ENCODE measurements at regions of chr3 and their contacts with region 1.

Region 1: GRCh38 chr3:72996473-72997333 is at the start of gene PPP4R2:
- DNase-seq: peak; percentile 83 to 98 (median 90)
- ATAC-seq: peak; percentile 85
- H3K4me3 ChIP-seq: peak within 1 kb of the TSS; percentile 90
- H3K4me3 Mint-ChIP-seq: peak within 1 kb of the TSS; percentile 88
- H3K27ac ChIP-seq: peak within 1 kb of the TSS; percentile 89 to 93
- H3K27ac Mint-ChIP-seq: peak within 1 kb of the TSS; percentile 86
- H3K4me1 ChIP-seq: peaks cover 29% of the 10 kb centered on the region
- H3K4me1 Mint-ChIP-seq: peaks cover 48% of the 10 kb centered on the region
- H3K27me3 ChIP-seq: no peaks in the 10 kb centered on the region
- H3K27me3 Mint-ChIP-seq: no peaks in the 10 kb centered on the region
- CTCF ChIP-seq: no peak
- total RNA-seq, gene PPP4R2: 67.8 to 80.3 TPM

Region 2: DNA sequence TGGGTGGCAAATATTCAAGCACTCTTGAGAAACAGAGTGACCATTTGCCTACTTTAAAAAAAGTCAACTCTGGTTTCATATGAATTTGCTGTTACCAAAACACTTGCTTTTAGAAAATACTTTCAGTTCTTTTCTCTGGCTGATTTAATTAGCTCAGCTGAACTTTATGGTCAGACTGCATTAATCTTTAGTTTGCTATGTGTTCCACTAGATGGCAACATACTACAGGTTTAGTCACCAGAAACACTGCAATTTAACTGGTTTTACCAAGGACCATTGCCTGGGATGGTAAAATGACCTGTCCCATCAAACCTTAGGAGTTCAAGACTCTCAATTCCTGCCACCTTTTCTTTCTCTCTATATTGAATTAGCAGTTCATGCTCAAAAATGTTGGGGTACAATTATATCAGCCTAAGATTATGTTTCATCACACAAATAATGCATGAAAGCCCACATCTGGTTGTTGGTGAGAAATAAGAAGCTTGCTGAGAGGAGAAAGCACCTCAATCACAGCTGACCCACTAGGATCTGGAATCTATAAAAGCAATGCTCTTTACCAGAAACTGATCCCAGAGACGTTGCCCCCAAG is 1285.7 kb before region 1 on chr3:
- CTCF ChIA-PET with region 1: no interaction called
- POLR2A ChIA-PET with region 1: no interaction called
- intact Hi-C with region 1: loop called in 1 of 2 experiments (anchors 10 kb)
- DNase-seq: peak in 3 of 14 experiments; percentile 68 to 72 (median 71)
- ATAC-seq: peak; percentile 58
- H3K4me3 ChIP-seq: no peak overlapping the region
- H3K4me3 Mint-ChIP-seq: peak overlapping the region; percentile 26
- H3K27ac ChIP-seq: no peak overlapping the region
- H3K27ac Mint-ChIP-seq: peak overlapping the region; percentile 80
- H3K4me1 ChIP-seq: peaks cover 50% of the 10 kb centered on the region
- H3K4me1 Mint-ChIP-seq: peaks cover 92% of the 10 kb centered on the region
- H3K27me3 ChIP-seq: no peaks in the 10 kb centered on the region
- H3K27me3 Mint-ChIP-seq: no peaks in the 10 kb centered on the region
- CTCF ChIP-seq: peak; percentile 86

Region 3: GRCh38 chr3:72756900-72757299 is 239.8 kb before region 1 on chr3:
- CTCF ChIA-PET with region 1: no interaction called
- POLR2A ChIA-PET with region 1: no interaction called
- intact Hi-C with region 1: loop called (anchors 5 to 10 kb)
- DNase-seq: peak in 13 of 14 experiments; percentile 12 to 89 (median 35)
- ATAC-seq: peak; percentile 96
- H3K4me3 ChIP-seq: peak overlapping the region; percentile 26
- H3K4me3 Mint-ChIP-seq: peak overlapping the region; percentile 68
- H3K27ac ChIP-seq: peak overlapping the region; percentile 42 to 63
- H3K27ac Mint-ChIP-seq: peak overlapping the region; percentile 85
- H3K4me1 ChIP-seq: peaks cover 22% of the 10 kb centered on the region
- H3K4me1 Mint-ChIP-seq: peaks cover 75% of the 10 kb centered on the region
- H3K27me3 ChIP-seq: no peaks in the 10 kb centered on the region
- H3K27me3 Mint-ChIP-seq: no peaks in the 10 kb centered on the region
- CTCF ChIP-seq: no peak

Region 4: GRCh38 chr3:72847751-72848702 is 148.7 kb before region 1 on chr3 and contains the start of gene SHQ1:
- CTCF ChIA-PET with region 1: interaction called, 3 read pairs
- POLR2A ChIA-PET with region 1: interaction called, 4 read pairs
- intact Hi-C with region 1: loop called (anchors 1 to 2 kb)
- DNase-seq: peak; percentile 86 to 98 (median 92)
- ATAC-seq: peak; percentile 93
- H3K4me3 ChIP-seq: peak within 1 kb of the TSS; percentile 93
- H3K4me3 Mint-ChIP-seq: peak within 1 kb of the TSS; percentile 97
- H3K27ac ChIP-seq: peak within 1 kb of the TSS in 1 of 2 donors; percentile 55
- H3K27ac Mint-ChIP-seq: peak within 1 kb of the TSS; percentile 88
- H3K4me1 ChIP-seq: peaks cover 24% of the 10 kb centered on the region
- H3K4me1 Mint-ChIP-seq: peaks cover 64% of the 10 kb centered on the region
- H3K27me3 ChIP-seq: no peaks in the 10 kb centered on the region
- H3K27me3 Mint-ChIP-seq: no peaks in the 10 kb centered on the region
- CTCF ChIP-seq: no peak
- total RNA-seq, gene SHQ1: 9.4 to 13.1 TPM

Region 5: DNA sequence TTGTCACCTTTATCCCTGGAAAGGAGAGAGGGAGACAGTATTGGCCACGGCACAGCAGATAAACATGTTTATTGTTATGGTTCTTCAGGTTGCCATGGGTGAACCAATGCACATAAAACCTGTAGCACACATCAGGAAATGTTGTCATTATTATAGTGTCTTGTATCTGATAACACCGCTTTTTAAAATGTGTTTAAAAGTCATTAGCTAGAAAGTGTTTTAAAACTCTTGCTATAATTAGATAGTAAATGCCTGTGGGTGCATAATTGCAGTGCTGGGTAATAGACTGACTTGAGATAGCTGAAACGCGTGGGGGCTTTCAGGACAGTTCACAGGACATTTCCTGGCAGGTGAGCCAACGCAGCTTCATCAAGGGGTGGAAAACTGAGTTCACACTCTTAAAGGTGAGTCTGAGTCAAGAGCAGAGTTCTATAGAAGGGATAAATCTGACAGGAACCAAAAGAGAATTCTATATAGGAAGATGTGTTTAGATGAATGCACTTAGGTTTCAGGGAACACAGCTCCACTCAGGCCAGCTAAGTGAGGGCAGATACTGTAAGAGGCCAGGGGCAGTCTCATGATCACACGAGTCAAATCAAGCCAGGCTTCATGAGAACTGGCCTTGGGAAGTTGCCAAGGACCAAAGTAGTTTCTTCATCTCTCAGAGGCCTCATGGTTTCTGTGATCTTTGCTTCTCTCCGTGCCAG is 35.7 kb before region 1 on chr3:
- CTCF ChIA-PET with region 1: interaction called, 3 read pairs
- POLR2A ChIA-PET with region 1: interaction called, 9 read pairs
- intact Hi-C with region 1: loop called in 1 of 2 experiments (anchors 2 kb)
- DNase-seq: peak in 1 of 14 experiments; percentile 43
- ATAC-seq: no peak
- H3K4me3 ChIP-seq: no peak overlapping the region
- H3K4me3 Mint-ChIP-seq: no peak overlapping the region
- H3K27ac ChIP-seq: no peak overlapping the region
- H3K27ac Mint-ChIP-seq: peak overlapping the region; percentile 45
- H3K4me1 ChIP-seq: peaks cover 26% of the 10 kb centered on the region
- H3K4me1 Mint-ChIP-seq: peaks cover 40% of the 10 kb centered on the region
- H3K27me3 ChIP-seq: no peaks in the 10 kb centered on the region
- H3K27me3 Mint-ChIP-seq: no peaks in the 10 kb centered on the region
- CTCF ChIP-seq: no peak

Region 6: GRCh38 chr3:73056014-73056844 is 59.5 kb after region 1 on chr3:
- CTCF ChIA-PET with region 1: interaction called, 15 read pairs
- POLR2A ChIA-PET with region 1: interaction called, 6 read pairs
- intact Hi-C with region 1: loop called (anchors 5 kb)
- DNase-seq: peak in 3 of 14 experiments; percentile 40 to 68 (median 44)
- ATAC-seq: peak; percentile 48
- H3K4me3 ChIP-seq: no peak overlapping the region
- H3K4me3 Mint-ChIP-seq: no peak overlapping the region
- H3K27ac ChIP-seq: no peak overlapping the region
- H3K27ac Mint-ChIP-seq: peak overlapping the region; percentile 18
- H3K4me1 ChIP-seq: no peaks in the 10 kb centered on the region
- H3K4me1 Mint-ChIP-seq: peaks cover 28% of the 10 kb centered on the region
- H3K27me3 ChIP-seq: no peaks in the 10 kb centered on the region
- H3K27me3 Mint-ChIP-seq: no peaks in the 10 kb centered on the region
- CTCF ChIP-seq: peak; percentile 79

Region 7: DNA sequence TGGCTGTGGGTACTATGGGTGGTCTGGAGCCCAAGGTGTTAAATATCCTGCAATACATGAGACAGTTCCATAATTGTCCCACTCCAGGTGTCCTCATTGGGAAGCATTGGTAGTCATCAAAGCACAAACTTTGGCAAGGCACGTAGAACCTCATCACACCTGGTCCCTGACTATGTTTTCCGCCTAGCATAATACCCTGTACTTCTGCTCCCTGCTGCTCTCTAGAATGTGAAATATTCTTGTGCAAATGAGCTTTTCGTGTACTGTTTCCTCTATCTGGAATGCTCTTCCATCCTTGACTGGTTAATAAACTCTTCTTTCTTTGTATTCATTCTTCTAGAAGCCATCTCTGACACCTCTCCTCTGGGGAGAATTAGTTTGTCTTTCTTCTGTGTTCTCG is 167.9 kb after region 1 on chr3:
- CTCF ChIA-PET with region 1: no interaction called
- POLR2A ChIA-PET with region 1: no interaction called
- intact Hi-C with region 1: no loop called
- DNase-seq: no peak
- ATAC-seq: no peak
- H3K4me3 ChIP-seq: no peak overlapping the region
- H3K4me3 Mint-ChIP-seq: no peak overlapping the region
- H3K27ac ChIP-seq: no peak overlapping the region
- H3K27ac Mint-ChIP-seq: no peak overlapping the region
- H3K4me1 ChIP-seq: no peaks in the 10 kb centered on the region
- H3K4me1 Mint-ChIP-seq: no peaks in the 10 kb centered on the region
- H3K27me3 ChIP-seq: no peaks in the 10 kb centered on the region
- H3K27me3 Mint-ChIP-seq: peaks cover 9% of the 10 kb centered on the region
- CTCF ChIP-seq: no peak

Measured in CD4-positive, alpha-beta T cell (primary cell).